HCT116 (cell line): ENCODE measurements at regions of chr5 and their contacts with region 1.

Region 1: GRCh38 chr5:10607666-10608073 is 43.8 kb downstream of the ANKRD33B start:
- DNase-seq: no peak
- ATAC-seq: peak; percentile 54
- H3K4me3 ChIP-seq: no peak overlapping the region
- H3K27ac ChIP-seq: no peak overlapping the region
- H3K4me1 ChIP-seq: peaks cover 4 to 18% of the 10 kb centered on the region in 2 experiments; a peak in 2 of 4 replicates
- H3K27me3 ChIP-seq: no peaks in the 10 kb centered on the region
- CTCF ChIP-seq: no peak
- POLR2A ChIP-seq: no peak
- RAD21 ChIP-seq: 0 out of 2 replicates have a peak, but pooled peaks have one; percentile 4

Region 2: DNA sequence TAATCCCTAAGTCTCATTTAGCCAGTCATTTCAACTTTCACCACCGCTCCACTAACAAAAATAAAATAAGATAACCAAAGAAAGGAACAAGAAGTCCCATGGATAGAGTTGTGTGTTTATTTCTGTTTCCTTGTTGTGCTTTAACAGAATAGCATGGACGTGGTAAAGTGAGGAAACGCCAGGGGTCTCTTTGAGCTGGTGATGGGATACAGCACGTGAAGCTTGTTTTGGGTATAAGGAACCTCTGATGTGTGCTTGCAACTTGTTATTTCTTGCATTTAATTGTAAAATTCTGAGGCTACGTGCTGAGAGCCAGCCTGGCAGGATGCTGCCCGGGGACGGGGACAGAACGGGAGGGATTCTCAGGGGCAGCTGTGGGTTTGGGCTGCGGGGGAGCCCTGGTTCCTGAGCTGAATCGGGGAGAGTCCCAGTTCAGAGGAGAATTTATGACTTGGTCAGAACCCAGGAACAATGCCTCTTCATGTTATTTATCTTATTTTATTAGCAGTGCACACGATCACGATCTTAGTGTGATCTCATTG is 19.6 kb after region 1 on chr5:
- CTCF ChIA-PET with region 1: interaction called, 15 read pairs
- POLR2A ChIA-PET with region 1: no interaction called
- RAD21 ChIA-PET with region 1: interaction called in 1 of 2 experiments, 3 read pairs
- intact Hi-C with region 1: no loop called
- DNase-seq: no peak
- ATAC-seq: peak; percentile 5
- H3K4me3 ChIP-seq: peak overlapping the region; percentile 27 to 43
- H3K27ac ChIP-seq: 0 out of 2 replicates have a peak overlapping the region, but pooled peaks have one; percentile 32
- H3K4me1 ChIP-seq: peaks cover 17 to 52% of the 10 kb centered on the region in 2 experiments
- H3K27me3 ChIP-seq: no peaks in the 10 kb centered on the region
- CTCF ChIP-seq: no peak
- POLR2A ChIP-seq: no peak
- RAD21 ChIP-seq: no peak